ENCODE measurements at regions of chr5 and their contacts with region 1.

Region 1: DNA sequence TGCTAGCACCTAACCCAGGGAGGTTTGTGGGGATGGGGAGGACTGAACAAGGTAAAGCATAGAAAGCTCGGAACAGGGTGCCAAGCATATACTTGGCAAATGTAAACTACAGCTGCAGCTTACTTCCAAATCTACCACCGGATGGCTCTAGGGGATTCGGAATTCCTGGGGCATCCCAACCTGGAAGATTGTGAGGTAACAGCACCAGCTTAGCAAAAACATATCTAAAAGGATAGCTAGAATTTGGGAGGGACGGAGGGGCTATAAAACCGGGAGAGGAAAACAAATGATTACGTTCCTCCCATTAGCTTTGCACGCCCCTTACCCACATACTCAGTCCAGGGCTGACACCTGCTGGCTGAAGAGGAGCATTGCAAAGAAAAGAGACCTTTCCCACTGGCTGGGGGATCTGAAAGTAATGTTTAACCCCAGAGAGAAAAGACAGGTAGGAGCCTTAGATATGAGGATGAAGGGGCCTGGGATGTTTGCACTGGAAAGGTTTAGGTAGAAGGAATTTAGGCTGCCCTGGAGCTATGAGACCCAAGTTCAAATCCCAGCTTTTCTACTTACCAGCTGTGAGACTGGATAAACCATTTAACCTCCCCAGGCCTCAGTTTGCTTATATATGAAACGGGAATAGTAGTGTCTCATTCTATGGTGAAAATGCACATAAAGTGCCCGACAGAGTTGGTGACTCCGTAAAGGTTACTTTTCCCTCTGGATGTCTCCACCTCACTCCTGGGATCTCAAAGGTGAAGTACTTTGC is 73.6 kb downstream of the FAM114A2 start:
- DNase-seq: no peak
- ATAC-seq: peak; percentile 86

Region 2: DNA sequence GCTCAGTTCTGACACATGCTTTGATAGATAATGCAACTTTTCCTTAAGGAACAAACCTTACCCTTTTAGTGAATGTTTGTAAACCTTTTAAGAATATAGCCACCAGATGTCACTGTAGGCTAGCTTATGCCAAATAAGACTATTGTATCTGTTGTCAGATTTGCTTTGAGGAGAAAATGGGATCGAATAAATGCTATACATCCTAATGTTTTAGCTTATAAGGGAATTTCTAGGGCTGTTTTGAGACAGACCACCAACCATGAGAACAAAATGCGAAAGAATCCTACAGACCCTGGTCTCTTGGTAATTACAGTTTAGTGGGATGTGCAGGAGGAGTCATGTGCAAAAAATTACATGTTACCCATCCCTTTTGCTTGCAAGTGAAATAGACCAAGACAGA is 1432.3 kb before region 1 on chr5:
- intact Hi-C with region 1: loop called (anchors 5 kb)
- DNase-seq: no peak
- ATAC-seq: peak; percentile 25

Region 3: GRCh38 chr5:153496835-153497234 is 468.2 kb before region 1 on chr5:
- intact Hi-C with region 1: loop called (anchors 2 kb)
- DNase-seq: no peak
- ATAC-seq: peak; percentile 46

Region 4: DNA sequence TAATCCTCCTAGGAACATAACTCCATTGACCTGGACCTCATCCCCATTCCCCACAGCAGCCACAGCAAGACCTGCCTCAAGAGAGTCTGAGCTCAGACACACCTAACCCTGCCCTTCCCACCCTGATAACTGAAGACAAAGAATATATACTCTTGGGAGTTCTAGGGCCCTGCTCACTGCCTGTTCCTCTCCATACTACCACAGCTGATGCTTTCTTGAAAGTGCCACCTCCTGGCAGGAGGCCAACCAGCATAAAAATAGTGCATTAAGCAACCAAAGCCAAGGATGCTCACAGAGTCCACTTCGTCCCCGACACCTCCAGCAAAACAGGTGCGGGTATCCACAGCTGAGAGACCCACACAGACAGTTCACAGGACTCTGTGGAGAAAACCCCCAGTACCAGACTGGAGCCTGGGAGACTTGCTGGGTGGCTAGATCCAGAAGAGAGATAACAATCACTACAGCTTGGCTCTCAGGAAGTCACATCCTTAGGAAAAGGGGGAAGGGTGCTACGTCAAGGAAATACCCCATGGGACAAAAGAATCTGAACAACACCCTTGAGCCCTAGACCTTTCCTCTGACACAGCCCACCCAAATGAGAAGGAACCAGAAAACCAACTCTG is 50.1 kb after region 1 on chr5:
- intact Hi-C with region 1: no loop called
- DNase-seq: peak; percentile 61
- ATAC-seq: peak; percentile 41